Kidney (tissue), 22 donors: ENCODE measurements at regions of chr14 and their contacts with region 1.

Region 1: DNA sequence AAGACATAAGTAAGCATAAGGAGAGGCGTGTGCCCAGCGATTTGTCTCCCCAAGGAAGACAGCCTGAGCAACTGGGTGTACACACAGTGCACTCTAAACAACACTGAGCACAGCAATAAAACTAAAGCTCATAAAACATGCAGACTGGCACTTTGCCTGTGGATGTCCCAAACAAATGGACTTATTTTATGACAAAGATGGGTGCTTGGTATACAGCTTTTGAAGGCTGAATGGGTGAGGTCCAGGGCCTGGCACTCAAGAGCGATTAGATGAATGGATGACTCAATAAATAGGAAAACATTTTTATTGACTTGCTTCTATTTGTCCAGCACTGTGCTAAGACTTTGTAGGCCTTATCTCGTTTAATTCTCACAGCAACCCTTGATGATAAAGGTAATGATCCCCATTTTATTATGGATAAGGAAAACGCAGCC is 28.5 kb downstream of the LGMN start:
- DNase-seq: no peak
- H3K4me3 ChIP-seq: no peak overlapping the region
- H3K27ac ChIP-seq: no peak overlapping the region
- H3K4me1 ChIP-seq: no peaks in the 10 kb centered on the region
- H3K27me3 ChIP-seq: no peaks in the 10 kb centered on the region
- CTCF ChIP-seq: no peak

Region 2: GRCh38 chr14:92783816-92784431 is 64.0 kb after region 1 on chr14:
- intact Hi-C with region 1: loop called (anchors 10 kb)
- DNase-seq: peak in 3 of 5 donors; percentile 29 to 78 (median 76)
- H3K4me3 ChIP-seq: no peak overlapping the region
- H3K27ac ChIP-seq: no peak overlapping the region
- H3K4me1 ChIP-seq: no peaks in the 10 kb centered on the region
- H3K27me3 ChIP-seq: no peaks in the 10 kb centered on the region
- CTCF ChIP-seq: peak; percentile 65

Region 3: DNA sequence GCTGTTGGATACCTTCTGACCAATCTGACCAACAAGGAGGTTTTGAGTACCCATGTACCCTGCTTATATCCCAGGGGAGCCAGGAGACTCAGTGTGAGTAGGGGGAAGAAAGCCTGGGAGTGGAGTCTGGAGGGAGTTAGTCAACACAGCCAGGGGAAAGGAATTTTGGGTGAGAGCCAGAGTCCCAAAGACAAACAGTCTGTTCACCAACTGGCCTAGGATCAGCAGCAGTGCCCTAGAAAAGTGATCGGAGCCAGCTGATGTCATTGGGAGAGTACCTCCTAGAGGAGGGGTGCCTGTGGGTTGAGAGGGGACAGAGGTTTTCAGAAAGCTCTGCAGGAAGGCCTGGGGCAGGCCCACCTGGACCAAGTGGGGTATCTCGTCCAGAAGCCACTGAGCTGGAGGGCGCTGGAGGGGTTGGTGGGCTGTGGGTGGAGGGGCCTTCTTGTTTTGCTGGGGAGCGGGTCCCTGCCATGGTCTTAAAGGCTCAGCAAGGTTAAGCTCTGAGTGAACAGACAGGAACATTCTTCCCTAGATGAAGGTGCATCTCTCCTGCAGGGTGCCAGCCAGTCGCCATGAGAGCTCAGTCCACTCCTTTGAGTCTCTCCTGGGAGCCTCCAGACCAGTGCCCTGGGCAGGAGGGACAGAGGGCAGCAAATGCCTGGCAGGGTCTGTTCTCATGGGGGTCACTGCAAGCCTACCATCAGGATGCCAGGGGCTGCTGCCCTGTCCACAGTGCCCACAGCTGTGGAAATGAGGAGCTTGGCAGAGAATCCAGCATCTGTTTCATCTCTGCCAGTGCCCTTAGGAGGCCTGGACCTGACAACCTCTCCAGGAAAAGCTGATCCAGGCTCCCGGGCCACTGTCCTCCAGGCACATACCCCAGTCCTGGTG is 266.6 kb after region 1 on chr14:
- intact Hi-C with region 1: no loop called
- DNase-seq: peak in 3 of 5 donors; percentile 37 to 71 (median 63)
- H3K4me3 ChIP-seq: no peak overlapping the region
- H3K27ac ChIP-seq: no peak overlapping the region
- H3K4me1 ChIP-seq: peaks cover 0 to 26% (median 0%) of the 10 kb centered on the region in 3 donors
- H3K27me3 ChIP-seq: no peaks in the 10 kb centered on the region
- CTCF ChIP-seq: no peak

Region 4: DNA sequence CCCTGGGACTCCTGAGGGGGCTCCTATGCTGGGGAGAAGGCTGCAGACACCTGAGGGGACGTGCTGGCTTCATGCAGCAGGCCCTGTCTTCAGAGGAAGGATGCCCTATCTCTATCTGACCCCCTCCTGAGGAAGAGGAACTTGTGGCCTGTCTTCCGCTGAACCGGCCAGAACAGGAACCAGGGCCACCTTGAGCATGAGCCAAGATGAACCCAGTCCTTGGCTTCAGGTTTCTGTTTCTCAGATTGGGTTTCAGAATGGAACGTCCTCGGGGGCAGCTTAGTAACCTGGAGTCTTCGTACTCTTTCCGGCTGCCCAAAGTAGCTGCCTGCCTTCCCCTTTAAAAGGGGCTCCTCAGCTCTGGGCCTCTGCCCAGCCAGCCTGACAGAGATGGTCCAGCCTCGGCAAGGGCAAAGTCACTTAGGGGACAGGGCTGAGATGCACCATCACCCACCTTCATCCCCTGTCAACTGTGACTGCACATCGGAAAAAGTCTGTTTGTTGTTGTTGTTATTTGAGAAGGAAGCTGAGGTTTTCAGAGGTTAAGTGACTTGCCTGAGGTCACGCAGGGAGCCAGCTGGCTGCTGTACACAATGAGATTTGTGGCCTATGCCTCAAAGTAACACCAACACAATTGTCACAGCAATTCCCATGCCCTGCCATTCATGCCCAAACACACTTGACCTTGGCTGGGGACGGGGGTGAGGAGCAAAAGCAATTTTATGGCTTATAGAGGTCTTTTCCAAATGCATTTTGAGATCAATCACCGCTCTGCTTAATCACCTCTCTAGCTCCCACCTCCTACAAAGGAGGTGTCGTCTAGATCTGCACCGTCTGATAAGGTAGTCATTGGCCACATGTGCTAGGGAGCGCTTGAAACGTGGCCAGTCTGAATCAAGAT is 1243.0 kb after region 1 on chr14:
- intact Hi-C with region 1: no loop called
- DNase-seq: peak in 4 of 5 donors; percentile 56 to 70 (median 66)
- H3K4me3 ChIP-seq: no peak overlapping the region
- H3K27ac ChIP-seq: peak overlapping the region in 1 of 2 donors; percentile 67
- H3K4me1 ChIP-seq: peaks cover 0 to 12% (median 0%) of the 10 kb centered on the region in 3 donors
- H3K27me3 ChIP-seq: no peaks in the 10 kb centered on the region
- CTCF ChIP-seq: no peak